Calu3 (cell line): ENCODE measurements at regions of chr7 and their contacts with region 1.

Region 1: GRCh38 chr7:99562832-99563231 is 4.4 kb downstream of the ZNF655 start:
- DNase-seq: peak; percentile 72
- H3K4me3 Mint-ChIP-seq: peak overlapping the region; percentile 13
- H3K27ac Mint-ChIP-seq: peak overlapping the region; percentile 75
- H3K4me1 Mint-ChIP-seq: peaks cover 25% of the 10 kb centered on the region
- H3K27me3 Mint-ChIP-seq: no peaks in the 10 kb centered on the region
- CTCF ChIP-seq: no peak

Region 2: DNA sequence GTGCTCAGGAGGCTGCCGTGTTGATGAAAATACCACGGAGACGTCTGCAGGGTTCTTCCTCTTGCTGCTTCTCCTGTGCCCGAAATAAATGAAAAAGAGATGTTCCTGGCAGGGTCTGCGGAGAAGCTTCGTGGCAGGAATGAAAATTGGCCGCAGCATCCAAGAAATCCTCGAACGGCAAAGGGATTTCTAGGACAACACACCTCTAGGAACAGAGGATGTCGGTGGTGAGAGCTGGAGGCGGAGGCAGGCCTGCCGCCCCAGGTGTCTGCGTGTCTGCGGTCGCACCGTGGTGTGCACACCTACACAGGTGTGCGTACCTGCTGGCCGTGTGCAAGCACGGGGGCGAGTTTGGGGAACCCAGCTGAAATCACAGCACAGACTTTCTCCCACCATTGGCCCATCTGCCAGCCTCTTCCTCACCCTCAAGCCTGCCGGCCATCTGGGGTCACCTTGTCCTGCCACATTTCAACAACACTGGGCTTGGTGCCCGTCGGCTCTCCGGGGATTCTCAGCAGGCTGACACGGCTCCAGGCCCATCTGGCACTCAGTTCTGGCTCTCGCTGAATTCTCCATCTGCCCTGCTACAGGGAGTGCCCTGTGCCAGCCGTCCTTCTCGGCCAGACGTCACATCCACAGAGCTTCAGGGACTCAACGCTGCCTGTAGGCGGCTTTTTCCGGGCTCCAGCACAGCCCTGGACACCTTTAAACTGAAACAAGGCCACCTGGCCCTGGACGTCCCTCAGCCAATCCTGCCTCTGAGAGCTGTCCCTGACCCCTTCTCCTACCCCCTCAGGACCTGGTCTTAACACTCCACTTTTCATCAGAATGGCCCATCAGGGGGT is 736.2 kb before region 1 on chr7:
- CTCF ChIA-PET with region 1: interaction called, 10 read pairs
- intact Hi-C with region 1: no loop called
- DNase-seq: no peak
- H3K4me3 Mint-ChIP-seq: no peak overlapping the region
- H3K27ac Mint-ChIP-seq: no peak overlapping the region
- H3K4me1 Mint-ChIP-seq: peaks cover 7% of the 10 kb centered on the region
- H3K27me3 Mint-ChIP-seq: peaks cover 13% of the 10 kb centered on the region
- CTCF ChIP-seq: no peak

Region 3: DNA sequence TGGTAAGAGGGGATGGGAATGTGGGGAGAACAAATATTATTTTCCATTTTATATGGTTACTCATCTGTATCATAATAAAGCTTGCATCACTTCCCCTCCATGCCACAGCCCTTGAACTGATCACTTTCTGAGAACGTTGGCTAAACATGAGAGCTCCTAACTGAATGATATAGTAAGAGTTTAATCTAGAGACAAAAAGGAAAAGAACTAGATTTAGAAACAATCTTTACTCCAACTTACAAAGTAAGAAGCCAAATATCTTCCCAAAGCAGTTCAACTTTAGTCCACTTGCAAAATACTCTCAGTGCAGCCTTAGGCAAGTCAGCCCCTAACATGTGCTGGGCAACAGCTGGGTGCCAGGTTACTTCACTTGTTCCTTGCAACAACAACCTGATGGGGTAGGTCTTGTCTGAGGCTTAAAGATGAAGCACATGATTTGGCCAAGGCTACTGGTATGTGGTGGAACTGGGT is 439.2 kb before region 1 on chr7:
- CTCF ChIA-PET with region 1: no interaction called
- intact Hi-C with region 1: no loop called
- DNase-seq: no peak
- H3K4me3 Mint-ChIP-seq: no peak overlapping the region
- H3K27ac Mint-ChIP-seq: peak overlapping the region; percentile 45
- H3K4me1 Mint-ChIP-seq: peaks cover 53% of the 10 kb centered on the region
- H3K27me3 Mint-ChIP-seq: no peaks in the 10 kb centered on the region
- CTCF ChIP-seq: no peak

Region 4: DNA sequence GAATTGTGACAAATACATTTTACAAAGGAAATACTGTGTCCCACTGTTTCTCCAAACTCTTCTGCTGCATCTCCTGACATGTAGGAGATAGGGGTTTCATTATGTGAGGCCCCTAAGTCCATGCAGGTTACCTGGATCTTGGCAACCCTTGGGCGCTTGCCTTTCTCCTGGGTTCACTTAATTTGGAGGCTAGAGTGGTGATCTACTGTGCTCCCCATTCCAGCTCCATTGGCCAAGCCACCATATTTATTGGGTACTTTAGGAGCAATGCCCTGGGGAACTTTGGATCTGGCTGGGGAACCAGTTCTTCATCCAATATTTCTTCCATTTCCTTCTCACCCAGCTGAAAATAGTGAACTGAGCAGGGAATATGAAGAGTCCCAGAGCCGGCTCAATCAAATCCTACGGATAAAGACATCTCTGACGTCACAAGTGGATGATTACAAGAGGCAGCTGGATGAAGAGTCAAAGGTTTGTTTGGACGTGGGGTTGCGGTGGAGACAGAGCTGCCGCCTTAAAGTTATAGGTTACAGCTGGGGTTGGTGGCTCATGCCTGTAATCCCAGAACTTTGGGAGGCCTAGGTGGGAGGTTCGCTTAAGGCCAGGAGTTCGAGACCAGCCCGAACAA is 271.7 kb before region 1 on chr7:
- CTCF ChIA-PET with region 1: no interaction called
- intact Hi-C with region 1: no loop called
- DNase-seq: no peak
- H3K4me3 Mint-ChIP-seq: no peak overlapping the region
- H3K27ac Mint-ChIP-seq: no peak overlapping the region
- H3K4me1 Mint-ChIP-seq: no peaks in the 10 kb centered on the region
- H3K27me3 Mint-ChIP-seq: no peaks in the 10 kb centered on the region
- CTCF ChIP-seq: no peak